Caki2 (cell line): ENCODE measurements at regions of chr19 and their contacts with region 1.

Region 1: DNA sequence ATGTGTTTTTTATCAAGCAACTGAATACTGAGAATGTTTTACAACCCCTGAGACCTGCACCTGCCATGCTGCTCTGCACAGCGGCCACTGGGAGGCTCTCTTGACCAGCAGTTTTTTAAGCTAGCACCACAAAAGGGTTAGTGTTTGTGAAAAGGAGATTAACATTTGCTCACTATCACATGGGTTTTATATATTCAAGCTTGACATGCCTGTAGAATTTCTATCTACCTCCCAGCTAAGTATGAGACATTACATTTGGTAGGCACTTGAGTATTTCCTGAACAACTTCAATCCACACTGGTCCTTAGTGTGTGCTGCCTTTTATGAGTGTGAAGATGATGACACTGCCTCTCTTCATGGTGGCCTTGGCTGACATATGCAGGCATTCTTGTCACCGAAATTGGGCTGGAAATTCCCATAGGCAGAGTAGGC is 1238.9 kb downstream of the UQCRFS1 start:
- DNase-seq: peak; percentile 60

Region 2: DNA sequence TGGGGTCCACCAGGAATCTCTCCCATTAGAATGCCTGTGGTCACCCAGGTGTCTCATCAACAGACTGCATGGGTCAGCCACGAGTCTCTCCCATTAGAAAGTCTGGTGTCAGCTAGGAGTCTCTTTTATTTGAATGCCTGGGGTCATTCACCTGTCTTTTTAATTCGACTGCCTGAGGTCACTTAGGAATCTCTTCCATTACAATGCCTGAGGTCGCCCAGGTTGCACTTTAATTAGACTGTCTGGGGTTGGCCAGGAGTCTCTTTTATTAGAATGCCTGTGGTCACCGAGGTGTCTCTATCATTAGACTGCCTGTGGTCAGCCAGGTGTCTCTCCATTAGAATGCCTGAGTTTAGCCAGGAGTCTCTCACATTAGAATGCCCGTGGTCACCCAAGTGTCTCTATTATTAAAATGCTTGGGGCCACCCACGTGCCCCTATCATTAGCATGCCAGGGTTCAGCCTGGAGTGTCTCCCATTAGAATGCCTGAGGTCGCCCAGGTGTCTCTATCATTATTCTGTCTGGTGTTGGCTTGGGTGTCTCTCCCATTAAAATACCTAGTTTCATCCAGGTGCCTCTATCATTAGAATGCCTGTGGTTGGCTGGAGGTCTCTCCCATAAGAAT is 235.4 kb before region 1 on chr19:
- in situ Hi-C with region 1: no loop called
- DNase-seq: no peak

Region 3: GRCh38 chr19:27833031-27833430 is 141.1 kb before region 1 on chr19:
- in situ Hi-C with region 1: no loop called
- DNase-seq: no peak

Region 4: GRCh38 chr19:28074737-28075136 is 100.6 kb after region 1 on chr19:
- in situ Hi-C with region 1: no loop called
- DNase-seq: peak; percentile 18

Region 5: GRCh38 chr19:28313633-28314032 is 339.5 kb after region 1 on chr19:
- in situ Hi-C with region 1: loop called (anchors 25 kb)
- DNase-seq: peak; percentile 84